Posterior cingulate gyrus (tissue), 11 donors: ENCODE measurements at regions of chr1 and their contacts with region 1.

Region 1: DNA sequence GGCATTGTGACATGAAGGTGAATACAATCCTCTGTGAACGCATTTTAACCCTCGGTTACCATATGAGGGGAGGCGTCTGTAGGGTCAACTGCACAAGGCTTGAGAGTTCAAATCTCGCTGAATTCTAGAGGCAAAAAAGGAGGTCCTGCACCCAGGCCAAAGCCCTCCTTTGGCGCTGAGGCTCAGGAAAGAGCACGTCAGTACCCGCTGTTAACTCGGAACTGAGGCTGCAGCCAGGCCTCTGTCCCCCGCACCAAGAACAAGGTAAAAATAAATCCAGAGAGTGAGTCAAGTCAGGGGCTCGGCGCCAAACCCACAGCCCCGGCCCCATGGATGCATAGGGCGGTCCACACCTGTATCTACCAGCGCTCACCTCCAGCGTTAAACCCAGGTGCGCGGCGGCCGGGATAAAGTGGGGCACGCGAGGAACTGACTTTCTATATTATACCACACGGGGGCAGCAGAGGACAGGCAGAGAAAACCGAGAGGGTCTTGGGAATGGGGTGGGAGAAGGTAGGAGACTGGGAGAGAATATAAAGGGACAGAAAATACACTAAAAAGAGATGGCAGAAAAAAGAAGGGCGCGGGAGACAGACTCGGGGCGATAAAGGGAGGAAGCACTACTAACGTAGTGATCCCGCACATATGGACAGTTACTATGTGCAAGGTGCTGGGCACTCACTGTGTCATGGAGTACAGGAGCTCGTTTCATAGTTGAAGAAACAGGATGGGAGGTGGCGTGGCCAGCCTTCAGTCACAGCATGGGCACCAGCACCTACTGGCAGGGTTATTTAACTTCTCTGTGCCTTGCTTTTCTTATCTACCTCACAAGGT is 54.8 kb downstream of the DMRTA2 start:
- DNase-seq: peak in 8 of 10 donors; percentile 42 to 89 (median 58)

Region 2: DNA sequence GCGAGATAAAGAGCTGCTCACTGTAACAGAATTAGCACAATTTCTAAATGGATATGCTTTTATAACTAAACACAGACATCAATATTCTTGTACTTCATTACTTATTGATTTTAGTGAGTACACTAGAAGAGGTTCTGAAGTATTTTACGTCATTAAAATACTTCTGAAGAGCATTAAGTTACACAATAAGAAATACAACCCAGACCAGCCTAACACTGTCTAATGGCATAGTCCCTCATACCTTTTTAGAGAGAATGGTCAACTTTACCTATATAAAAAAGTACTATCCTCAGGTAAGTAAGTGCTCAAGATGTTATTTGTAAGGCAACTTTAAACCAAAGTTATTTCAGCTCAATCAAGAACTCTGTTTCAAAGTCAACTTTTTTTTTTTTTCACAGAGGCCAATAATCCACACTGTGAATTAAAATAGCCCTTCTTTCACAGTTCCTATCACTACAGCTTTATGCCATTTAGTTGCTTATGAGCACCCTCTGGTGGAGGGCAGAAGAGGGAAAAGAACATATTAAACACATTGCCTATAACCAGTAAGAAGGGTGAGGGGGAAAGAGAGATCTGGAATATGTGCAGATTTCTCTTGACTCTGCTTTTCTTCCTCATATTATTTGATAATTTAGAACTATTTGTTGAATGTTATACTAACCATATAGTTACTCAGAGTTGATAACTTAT is 236.9 kb after region 1 on chr1:
- intact Hi-C with region 1: loop called (anchors 5 kb)
- DNase-seq: no peak

Region 3: GRCh38 chr1:50735443-50735842 is 367.0 kb after region 1 on chr1:
- intact Hi-C with region 1: loop called (anchors 1 kb)
- DNase-seq: no peak